HEK293 (cell line): ENCODE measurements at regions of chr7 and their contacts with region 1.

Region 1: GRCh38 chr7:98745722-98746318 is 124.0 kb downstream of the TMEM130 start:
- H3K4me3 ChIP-seq: no peak overlapping the region
- H3K27ac ChIP-seq: no peak overlapping the region
- H3K4me1 ChIP-seq: no peaks in the 10 kb centered on the region
- CTCF ChIP-seq: peak; percentile 72

Region 2: GRCh38 chr7:98420966-98421612 is 324.7 kb before region 1 on chr7:
- CTCF ChIA-PET with region 1: interaction called, 14 read pairs
- POLR2A ChIA-PET with region 1: interaction called, 3 read pairs
- H3K4me3 ChIP-seq: no peak overlapping the region
- H3K27ac ChIP-seq: no peak overlapping the region
- H3K4me1 ChIP-seq: no peaks in the 10 kb centered on the region
- CTCF ChIP-seq: peak; percentile 96

Region 3: GRCh38 chr7:98724591-98724990 is 21.2 kb before region 1 on chr7:
- CTCF ChIA-PET with region 1: interaction called, 12 read pairs
- POLR2A ChIA-PET with region 1: no interaction called
- H3K4me3 ChIP-seq: no peak overlapping the region
- H3K27ac ChIP-seq: no peak overlapping the region
- H3K4me1 ChIP-seq: no peaks in the 10 kb centered on the region
- CTCF ChIP-seq: no peak

Region 4: GRCh38 chr7:98763441-98763840 is 17.6 kb after region 1 on chr7:
- CTCF ChIA-PET with region 1: interaction called, 10 read pairs
- POLR2A ChIA-PET with region 1: interaction called, 3 read pairs
- H3K4me3 ChIP-seq: no peak overlapping the region
- H3K27ac ChIP-seq: no peak overlapping the region
- H3K4me1 ChIP-seq: no peaks in the 10 kb centered on the region
- CTCF ChIP-seq: no peak

Region 5: DNA sequence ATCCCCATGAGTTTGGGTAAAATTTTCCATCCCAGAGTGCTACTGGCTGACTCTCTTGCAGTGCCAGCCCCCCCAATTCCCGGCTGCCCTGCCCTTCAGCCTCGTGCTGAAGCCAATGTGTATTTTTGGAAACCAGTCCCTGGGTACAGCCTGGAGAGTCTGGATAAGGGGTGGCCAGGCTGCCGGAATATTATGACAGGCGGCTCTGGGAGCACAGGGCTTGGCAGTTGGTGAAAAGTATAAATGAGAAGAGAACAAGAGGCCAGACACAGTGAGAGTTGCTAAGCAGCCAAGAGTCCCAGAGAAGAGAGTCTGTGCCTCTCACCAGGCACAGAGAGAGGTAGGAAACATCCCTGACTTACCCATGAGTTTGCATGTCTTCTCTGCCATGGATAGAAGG is 70.4 kb after region 1 on chr7:
- CTCF ChIA-PET with region 1: no interaction called
- POLR2A ChIA-PET with region 1: no interaction called
- H3K4me3 ChIP-seq: no peak overlapping the region
- H3K27ac ChIP-seq: no peak overlapping the region
- H3K4me1 ChIP-seq: no peaks in the 10 kb centered on the region
- CTCF ChIP-seq: no peak

Region 6: DNA sequence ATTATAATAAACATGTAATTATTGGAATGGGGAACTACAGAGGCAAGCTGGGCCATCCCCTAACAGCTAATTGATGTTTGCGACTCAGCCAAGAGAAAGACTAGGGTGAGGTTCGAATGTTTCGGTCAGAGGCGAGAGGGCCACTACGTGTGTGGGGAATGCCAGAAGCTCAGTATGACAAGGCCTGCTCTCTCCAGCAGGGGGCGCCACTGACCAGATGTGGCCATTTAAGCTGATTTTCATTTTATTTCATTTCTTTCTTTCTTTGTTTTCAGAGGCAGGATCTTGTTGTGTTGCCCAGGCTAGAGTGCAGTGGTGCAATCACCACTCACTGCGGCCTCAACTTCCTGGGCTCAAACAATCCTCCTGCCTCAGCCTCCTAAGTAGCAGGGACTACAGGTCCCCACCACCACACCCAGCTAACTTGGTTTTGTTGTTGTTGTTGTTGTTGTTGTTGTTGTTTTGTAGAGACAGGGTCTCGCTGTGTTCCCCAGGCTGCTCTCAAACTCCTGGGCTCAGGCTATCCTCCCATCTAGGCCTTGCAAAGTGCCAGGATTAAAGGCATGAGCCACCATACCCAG is 85.9 kb after region 1 on chr7:
- CTCF ChIA-PET with region 1: interaction called, 26 read pairs
- POLR2A ChIA-PET with region 1: no interaction called
- H3K4me3 ChIP-seq: no peak overlapping the region
- H3K27ac ChIP-seq: no peak overlapping the region
- H3K4me1 ChIP-seq: no peaks in the 10 kb centered on the region
- CTCF ChIP-seq: peak; percentile 57

Region 7: GRCh38 chr7:99571768-99572167 is 825.9 kb after region 1 on chr7:
- CTCF ChIA-PET with region 1: no interaction called
- POLR2A ChIA-PET with region 1: no interaction called
- H3K4me3 ChIP-seq: no peak overlapping the region
- H3K27ac ChIP-seq: no peak overlapping the region
- H3K4me1 ChIP-seq: peaks cover 4% of the 10 kb centered on the region; the same call in 1 of the 2 replicates
- CTCF ChIP-seq: no peak